ENCODE measurements at regions of chrX and their contacts with region 1.

Region 1: DNA sequence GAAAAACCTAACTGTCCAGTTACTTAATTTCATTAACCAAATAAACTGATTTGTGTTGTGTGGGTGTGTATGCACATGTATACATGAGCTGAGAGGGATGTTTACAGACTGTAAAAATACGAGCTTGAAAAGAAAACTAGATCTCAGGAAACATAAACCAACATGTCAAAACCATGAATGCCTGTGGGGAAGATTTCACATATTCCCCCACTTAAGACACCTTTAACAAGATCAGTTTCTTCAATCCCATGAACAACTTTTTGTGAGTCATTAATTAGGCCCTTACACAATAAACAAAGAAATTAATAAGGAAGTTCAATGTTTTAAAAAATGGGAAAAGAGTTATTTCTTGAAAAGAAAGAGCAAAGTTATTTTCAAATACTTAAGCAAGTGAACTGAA is 170.8 kb downstream of the ZNF674 start:
- DNase-seq: no peak
- H3K4me3 ChIP-seq: no peak overlapping the region
- H3K27ac ChIP-seq: no peak overlapping the region
- H3K4me1 ChIP-seq: no peaks in the 10 kb centered on the region
- H3K27me3 ChIP-seq: peaks cover 0 to 17% of the 10 kb centered on the region in 2 donors
- CTCF ChIP-seq: no peak
- POLR2A ChIP-seq: no peak

Region 2: DNA sequence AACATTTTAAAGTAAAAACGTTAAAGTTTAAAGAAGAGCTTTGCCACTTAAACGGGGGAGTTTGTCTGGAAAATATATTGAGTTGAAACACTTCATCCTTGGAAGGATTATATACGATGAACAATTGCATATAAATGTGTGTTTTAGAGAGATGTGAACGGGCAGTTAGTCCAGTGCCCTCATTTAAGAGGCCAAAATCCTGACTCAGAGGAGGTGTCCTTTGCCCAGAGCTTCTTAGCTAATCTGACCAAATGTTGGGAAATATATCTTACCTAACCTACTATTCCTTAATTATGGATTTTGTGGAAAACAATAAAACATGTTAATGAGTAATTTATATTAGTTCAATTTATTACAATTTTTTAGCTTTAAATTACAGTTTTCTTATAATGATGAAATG is 846.5 kb before region 1 on chrX:
- intact Hi-C with region 1: no loop called
- DNase-seq: no peak
- H3K4me3 ChIP-seq: no peak overlapping the region
- H3K27ac ChIP-seq: no peak overlapping the region
- H3K4me1 ChIP-seq: no peaks in the 10 kb centered on the region
- H3K27me3 ChIP-seq: peaks cover 0 to 22% of the 10 kb centered on the region in 2 donors
- CTCF ChIP-seq: no peak
- POLR2A ChIP-seq: no peak

Region 3: GRCh38 chrX:46333550-46333949 is 40.8 kb before region 1 on chrX:
- intact Hi-C with region 1: loop called (anchors 2 kb)
- DNase-seq: no peak
- H3K4me3 ChIP-seq: no peak overlapping the region
- H3K27ac ChIP-seq: no peak overlapping the region
- H3K4me1 ChIP-seq: no peaks in the 10 kb centered on the region
- H3K27me3 ChIP-seq: peaks cover 0 to 21% of the 10 kb centered on the region in 2 donors
- CTCF ChIP-seq: no peak
- POLR2A ChIP-seq: no peak

Region 4: DNA sequence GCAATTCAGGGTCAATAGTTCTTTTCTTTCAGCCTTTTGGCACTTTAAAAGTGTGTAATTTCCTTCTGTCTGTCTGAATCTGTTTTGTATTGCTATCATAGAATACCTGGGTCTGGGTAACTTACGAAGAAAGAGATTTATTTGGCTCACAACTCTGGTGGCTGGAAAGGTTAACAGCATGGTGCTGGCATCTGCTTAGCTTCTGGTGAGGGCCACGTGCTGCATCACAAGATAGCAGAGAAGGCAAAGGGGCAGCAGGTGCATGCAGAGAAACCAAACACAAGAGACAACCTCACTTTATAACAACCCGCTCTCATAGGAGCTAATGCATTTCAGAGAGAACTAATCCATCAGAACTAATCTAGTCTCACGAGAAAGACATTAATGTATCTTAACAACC is 722.6 kb after region 1 on chrX:
- intact Hi-C with region 1: no loop called
- DNase-seq: no peak
- H3K4me3 ChIP-seq: no peak overlapping the region
- H3K27ac ChIP-seq: no peak overlapping the region
- H3K4me1 ChIP-seq: no peaks in the 10 kb centered on the region
- H3K27me3 ChIP-seq: peaks cover 0 to 37% of the 10 kb centered on the region in 2 donors
- CTCF ChIP-seq: no peak
- POLR2A ChIP-seq: no peak